PC-9 (cell line): ENCODE measurements at regions of chr12 and their contacts with region 1.

Region 1: GRCh38 chr12:13233830-13234641 is 37.5 kb downstream of the EMP1 start:
- DNase-seq: peak in 1 of 2 experiments; percentile 62
- H3K4me3 ChIP-seq: no peak overlapping the region
- H3K27ac ChIP-seq: no peak overlapping the region
- H3K4me1 ChIP-seq: peaks cover 8% of the 10 kb centered on the region; the same call in 1 of the 2 replicates
- H3K27me3 ChIP-seq: no peaks in the 10 kb centered on the region
- CTCF ChIP-seq: peak; percentile 96

Region 2: GRCh38 chr12:12916135-12916944 is 317.7 kb before region 1 on chr12:
- CTCF ChIA-PET with region 1: no interaction called
- POLR2A ChIA-PET with region 1: no interaction called
- intact Hi-C with region 1: loop called (anchors 1 kb)
- DNase-seq: peak; percentile 55 to 82
- H3K4me3 ChIP-seq: no peak overlapping the region
- H3K27ac ChIP-seq: no peak overlapping the region
- H3K4me1 ChIP-seq: 0 out of 2 replicates have a peak, but pooled peaks cover 5% of the 10 kb centered on the region
- H3K27me3 ChIP-seq: no peaks in the 10 kb centered on the region
- CTCF ChIP-seq: peak; percentile 95

Region 3: GRCh38 chr12:12964255-12964654 is 269.8 kb before region 1 on chr12:
- CTCF ChIA-PET with region 1: no interaction called
- POLR2A ChIA-PET with region 1: no interaction called
- intact Hi-C with region 1: no loop called
- DNase-seq: no peak
- H3K4me3 ChIP-seq: no peak overlapping the region
- H3K27ac ChIP-seq: no peak overlapping the region
- H3K4me1 ChIP-seq: no peaks in the 10 kb centered on the region
- H3K27me3 ChIP-seq: no peaks in the 10 kb centered on the region
- CTCF ChIP-seq: no peak

Region 4: DNA sequence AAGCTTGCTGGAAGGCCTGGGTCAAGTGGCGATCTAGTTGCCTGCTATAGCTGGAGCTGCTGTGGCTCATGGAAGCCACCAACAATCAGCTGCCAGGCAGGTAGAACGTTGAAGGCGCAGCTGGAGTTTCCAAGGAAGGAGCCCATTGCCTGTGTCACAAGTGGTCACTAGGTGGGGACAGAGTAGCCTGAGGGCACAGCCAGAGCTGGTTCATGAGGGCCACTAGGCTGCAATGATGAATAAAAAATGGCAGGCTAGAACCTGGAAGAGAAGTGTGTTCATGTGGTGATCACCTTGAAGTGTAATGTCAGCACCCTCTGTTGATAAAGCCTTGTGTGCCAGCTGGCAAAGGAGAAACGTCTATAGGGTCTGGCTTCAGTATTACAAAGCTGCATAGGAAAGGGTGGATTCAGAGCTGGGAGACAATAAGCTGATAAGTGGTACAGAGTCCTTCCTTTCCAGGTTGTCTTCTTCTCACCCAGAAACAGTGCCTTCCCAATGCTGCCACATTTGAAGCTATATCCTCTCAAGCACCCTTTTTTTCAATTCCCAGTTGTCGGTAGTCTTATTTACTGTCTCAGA is 128.3 kb after region 1 on chr12:
- CTCF ChIA-PET with region 1: no interaction called
- POLR2A ChIA-PET with region 1: no interaction called
- intact Hi-C with region 1: no loop called
- DNase-seq: peak in 1 of 2 experiments; percentile 82
- H3K4me3 ChIP-seq: no peak overlapping the region
- H3K27ac ChIP-seq: no peak overlapping the region
- H3K4me1 ChIP-seq: no peaks in the 10 kb centered on the region
- H3K27me3 ChIP-seq: no peaks in the 10 kb centered on the region
- CTCF ChIP-seq: peak; percentile 72